ENCODE measurements at regions of chr17 and their contacts with region 1.

Region 1: GRCh38 chr17:82051776-82052637 is at the starts of genes GPS1 and RFNG:
- DNase-seq: peak; percentile 68 to 87 (median 80)
- ATAC-seq: peak; percentile 91
- H3K4me3 ChIP-seq: peak within 1 kb of the TSS; percentile 74
- H3K4me3 Mint-ChIP-seq: peak within 1 kb of the TSS; percentile 60 to 92 (median 86)
- H3K27ac ChIP-seq: peak within 1 kb of the TSS; percentile 72
- H3K27ac Mint-ChIP-seq: peak within 1 kb of the TSS in 8 of 9 donors; percentile 51 to 91 (median 78)
- H3K4me1 ChIP-seq: peaks cover 18 to 31% of the 10 kb centered on the region in 2 donors
- H3K4me1 Mint-ChIP-seq: peaks cover 5 to 28% (median 13%) of the 10 kb centered on the region in 7 donors
- H3K27me3 ChIP-seq: no peaks in the 10 kb centered on the region
- H3K27me3 Mint-ChIP-seq: no peaks in the 10 kb centered on the region
- total RNA-seq, gene GPS1: 68.3 to 88.1 (median 71.7) TPM
- total RNA-seq, gene RFNG: 25.0 to 45.5 (median 31.5) TPM

Region 2: GRCh38 chr17:81967533-81968395 is 84.2 kb before region 1 on chr17:
- CTCF ChIA-PET with region 1: no interaction called
- POLR2A ChIA-PET with region 1: no interaction called
- intact Hi-C with region 1: no loop called
- DNase-seq: peak; percentile 62 to 90 (median 89)
- ATAC-seq: peak; percentile 97
- H3K4me3 ChIP-seq: peak overlapping the region; percentile 43
- H3K4me3 Mint-ChIP-seq: peak overlapping the region; percentile 60 to 84 (median 76)
- H3K27ac ChIP-seq: peak overlapping the region; percentile 58
- H3K27ac Mint-ChIP-seq: peak overlapping the region; percentile 68 to 93 (median 84)
- H3K4me1 ChIP-seq: peaks cover 23% of the 10 kb centered on the region in 2 donors
- H3K4me1 Mint-ChIP-seq: peaks cover 4 to 40% (median 20%) of the 10 kb centered on the region in 7 donors
- H3K27me3 ChIP-seq: peaks cover 0 to 2% of the 10 kb centered on the region in 2 donors
- H3K27me3 Mint-ChIP-seq: peaks cover 0 to 25% (median 0%) of the 10 kb centered on the region in 5 donors

Region 3: GRCh38 chr17:82065638-82066303 is 13.8 kb after region 1 on chr17 and contains the start of gene DUS1L:
- CTCF ChIA-PET with region 1: no interaction called
- POLR2A ChIA-PET with region 1: interaction called, 54 read pairs
- intact Hi-C with region 1: loop called in 1 of 2 experiments (anchors 1 kb)
- DNase-seq: peak; percentile 55 to 87 (median 71)
- ATAC-seq: peak; percentile 95
- H3K4me3 ChIP-seq: peak within 1 kb of the TSS; percentile 66
- H3K4me3 Mint-ChIP-seq: peak within 1 kb of the TSS; percentile 73 to 91 (median 82)
- H3K27ac ChIP-seq: peak within 1 kb of the TSS; percentile 86
- H3K27ac Mint-ChIP-seq: peak within 1 kb of the TSS; percentile 86 to 95 (median 93)
- H3K4me1 ChIP-seq: peaks cover 8 to 27% of the 10 kb centered on the region in 2 donors
- H3K4me1 Mint-ChIP-seq: peaks cover 0 to 18% (median 10%) of the 10 kb centered on the region in 7 donors
- H3K27me3 ChIP-seq: no peaks in the 10 kb centered on the region
- H3K27me3 Mint-ChIP-seq: no peaks in the 10 kb centered on the region
- total RNA-seq, gene DUS1L: 127 to 157 (median 147) TPM

Region 4: DNA sequence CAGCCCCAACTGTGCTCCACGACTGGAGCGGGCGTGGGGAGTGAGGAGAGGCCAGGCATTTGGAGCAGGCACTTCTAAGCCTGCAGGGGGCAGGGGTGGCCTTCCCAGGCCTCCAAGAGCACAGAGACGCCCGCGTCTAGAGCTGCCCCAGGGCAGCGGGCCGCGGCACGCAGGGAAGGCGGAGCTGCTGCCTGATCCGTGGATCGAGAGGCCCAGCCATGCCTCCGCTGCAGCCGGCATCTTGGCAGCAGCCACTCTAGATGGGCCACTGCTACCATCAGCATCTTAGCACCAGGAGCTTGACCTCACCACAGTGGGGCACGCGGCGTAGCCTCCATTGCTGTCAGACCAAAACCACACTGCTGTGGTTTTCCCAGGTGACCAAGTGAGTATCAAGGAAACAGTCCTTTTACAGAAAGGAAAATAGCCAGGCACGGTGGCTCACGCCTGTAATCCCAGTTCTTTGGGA is 616.7 kb after region 1 on chr17:
- CTCF ChIA-PET with region 1: no interaction called
- POLR2A ChIA-PET with region 1: no interaction called
- intact Hi-C with region 1: no loop called
- DNase-seq: peak in 7 of 9 donors; percentile 23 to 45 (median 42)
- ATAC-seq: peak; percentile 92
- H3K4me3 ChIP-seq: no peak overlapping the region
- H3K4me3 Mint-ChIP-seq: peak overlapping the region in 6 of 10 donors; percentile 21 to 60 (median 47)
- H3K27ac ChIP-seq: no peak overlapping the region
- H3K27ac Mint-ChIP-seq: no peak overlapping the region
- H3K4me1 ChIP-seq: no peaks in the 10 kb centered on the region
- H3K4me1 Mint-ChIP-seq: peaks cover 0 to 12% (median 9%) of the 10 kb centered on the region in 7 donors
- H3K27me3 ChIP-seq: no peaks in the 10 kb centered on the region
- H3K27me3 Mint-ChIP-seq: no peaks in the 10 kb centered on the region

Measured in naive thymus-derived CD4-positive, alpha-beta T cell (primary cell).